ENCODE measurements at regions of chr11 and their contacts with region 1.

Region 1: GRCh38 chr11:111526501-111526900 is 11.9 kb downstream of the HOATZ start:
- DNase-seq: peak; percentile 81
- H3K4me3 Mint-ChIP-seq: no peak overlapping the region
- H3K27ac Mint-ChIP-seq: peak overlapping the region; percentile 67
- H3K4me1 Mint-ChIP-seq: peaks cover 72% of the 10 kb centered on the region
- H3K27me3 Mint-ChIP-seq: peaks cover 3% of the 10 kb centered on the region

Region 2: GRCh38 chr11:111540114-111540936 is 13.8 kb after region 1 on chr11 and contains the start of gene LAYN:
- CTCF ChIA-PET with region 1: interaction called, 4 read pairs
- intact Hi-C with region 1: loop called (anchors 1 kb)
- DNase-seq: peak; percentile 35
- H3K4me3 Mint-ChIP-seq: peak within 1 kb of the TSS; percentile 67
- H3K27ac Mint-ChIP-seq: peak within 1 kb of the TSS; percentile 61
- H3K4me1 Mint-ChIP-seq: peaks cover 22% of the 10 kb centered on the region
- H3K27me3 Mint-ChIP-seq: peaks cover 45% of the 10 kb centered on the region
- total RNA-seq, gene LAYN: 3.5 to 4.1 TPM

Region 3: GRCh38 chr11:111557425-111558111 is 31.1 kb after region 1 on chr11:
- CTCF ChIA-PET with region 1: no interaction called
- intact Hi-C with region 1: loop called (anchors 2 kb)
- DNase-seq: no peak
- H3K4me3 Mint-ChIP-seq: no peak overlapping the region
- H3K27ac Mint-ChIP-seq: no peak overlapping the region
- H3K4me1 Mint-ChIP-seq: peaks cover 7% of the 10 kb centered on the region
- H3K27me3 Mint-ChIP-seq: peaks cover 8% of the 10 kb centered on the region

Region 4: DNA sequence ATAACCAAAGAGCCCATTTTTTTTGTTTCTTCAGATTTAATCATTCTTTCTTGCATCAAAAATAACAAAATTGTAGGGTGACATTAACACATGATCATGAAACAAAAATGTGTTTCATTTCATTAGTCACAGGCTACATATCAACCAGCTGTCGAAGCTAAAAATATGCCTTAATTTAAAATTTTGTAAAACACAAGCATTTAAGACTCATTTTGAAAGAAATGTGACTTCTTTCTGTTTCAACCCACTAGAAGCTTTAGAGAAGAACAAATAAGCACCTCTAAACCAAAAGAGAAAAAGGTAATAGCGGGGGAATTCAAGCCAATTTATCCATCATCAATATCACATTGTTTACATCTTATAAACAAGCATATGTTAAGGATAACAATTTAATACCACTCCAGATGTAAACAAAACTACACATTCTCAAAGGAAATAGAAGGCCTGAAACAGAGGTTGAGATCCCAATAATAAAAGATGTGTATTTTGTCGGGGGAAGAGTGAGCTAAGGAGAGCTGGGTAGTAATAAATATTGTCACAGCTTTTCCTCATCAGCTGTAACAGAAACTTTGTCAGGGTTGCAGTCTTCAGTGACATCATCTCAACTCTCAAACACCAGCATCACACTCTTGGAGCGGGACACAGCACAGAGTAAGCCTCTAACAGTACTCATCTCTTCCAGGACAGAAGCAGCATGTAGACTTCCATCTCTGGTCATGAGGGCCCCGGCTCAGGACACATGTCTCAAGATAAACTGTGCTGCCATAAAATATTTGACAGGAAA is 302.9 kb after region 1 on chr11:
- CTCF ChIA-PET with region 1: no interaction called
- intact Hi-C with region 1: loop called (anchors 1 kb)
- DNase-seq: peak; percentile 7
- H3K4me3 Mint-ChIP-seq: no peak overlapping the region
- H3K27ac Mint-ChIP-seq: no peak overlapping the region
- H3K4me1 Mint-ChIP-seq: peaks cover 19% of the 10 kb centered on the region
- H3K27me3 Mint-ChIP-seq: no peaks in the 10 kb centered on the region

Region 5: DNA sequence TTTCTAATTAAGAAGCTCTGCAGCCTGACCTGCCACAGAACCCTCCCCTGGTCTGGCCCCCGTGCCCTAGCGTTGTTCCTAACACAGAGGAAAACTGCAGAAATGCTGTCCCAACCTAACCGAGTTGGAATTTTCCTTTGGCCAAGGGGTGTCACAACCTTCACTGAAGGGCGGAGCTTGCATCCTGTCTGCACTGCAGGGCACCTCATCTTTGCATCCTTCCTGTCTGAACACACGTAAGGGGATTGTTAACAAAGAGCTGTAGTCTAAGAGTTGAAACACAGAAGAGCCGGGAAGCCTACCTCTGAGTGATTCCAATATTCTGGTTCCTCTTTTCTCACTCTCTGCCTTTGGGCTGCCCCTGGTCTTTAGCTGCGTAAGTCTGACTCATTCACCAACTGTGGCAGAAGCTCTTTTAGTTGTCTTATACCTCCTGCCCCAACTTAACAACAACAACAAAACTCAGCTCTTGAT is 412.2 kb after region 1 on chr11:
- CTCF ChIA-PET with region 1: no interaction called
- intact Hi-C with region 1: loop called (anchors 2 kb)
- DNase-seq: peak; percentile 75
- H3K4me3 Mint-ChIP-seq: peak overlapping the region; percentile 76
- H3K27ac Mint-ChIP-seq: peak overlapping the region; percentile 84
- H3K4me1 Mint-ChIP-seq: peaks cover 43% of the 10 kb centered on the region
- H3K27me3 Mint-ChIP-seq: no peaks in the 10 kb centered on the region